BJ (cell line): ENCODE measurements at regions of chr6 and their contacts with region 1.

Region 1: GRCh38 chr6:31652925-31653718 is 661 bp upstream of the BAG6 start:
- DNase-seq: no peak
- H3K4me3 ChIP-seq: peak overlapping the region; percentile 77
- H3K27me3 ChIP-seq: no peaks in the 10 kb centered on the region
- CTCF ChIP-seq: peak; percentile 17; the same call in 1 of the 2 replicates

Region 2: GRCh38 chr6:31639449-31639861 is 13.7 kb before region 1 on chr6:
- CTCF ChIA-PET with region 1: interaction called, 15 read pairs
- POLR2A ChIA-PET with region 1: interaction called, 3 read pairs
- DNase-seq: no peak
- H3K4me3 ChIP-seq: no peak overlapping the region
- H3K27me3 ChIP-seq: no peaks in the 10 kb centered on the region
- CTCF ChIP-seq: no peak